ENCODE measurements at regions of chr12 and their contacts with region 1.

Region 1: DNA sequence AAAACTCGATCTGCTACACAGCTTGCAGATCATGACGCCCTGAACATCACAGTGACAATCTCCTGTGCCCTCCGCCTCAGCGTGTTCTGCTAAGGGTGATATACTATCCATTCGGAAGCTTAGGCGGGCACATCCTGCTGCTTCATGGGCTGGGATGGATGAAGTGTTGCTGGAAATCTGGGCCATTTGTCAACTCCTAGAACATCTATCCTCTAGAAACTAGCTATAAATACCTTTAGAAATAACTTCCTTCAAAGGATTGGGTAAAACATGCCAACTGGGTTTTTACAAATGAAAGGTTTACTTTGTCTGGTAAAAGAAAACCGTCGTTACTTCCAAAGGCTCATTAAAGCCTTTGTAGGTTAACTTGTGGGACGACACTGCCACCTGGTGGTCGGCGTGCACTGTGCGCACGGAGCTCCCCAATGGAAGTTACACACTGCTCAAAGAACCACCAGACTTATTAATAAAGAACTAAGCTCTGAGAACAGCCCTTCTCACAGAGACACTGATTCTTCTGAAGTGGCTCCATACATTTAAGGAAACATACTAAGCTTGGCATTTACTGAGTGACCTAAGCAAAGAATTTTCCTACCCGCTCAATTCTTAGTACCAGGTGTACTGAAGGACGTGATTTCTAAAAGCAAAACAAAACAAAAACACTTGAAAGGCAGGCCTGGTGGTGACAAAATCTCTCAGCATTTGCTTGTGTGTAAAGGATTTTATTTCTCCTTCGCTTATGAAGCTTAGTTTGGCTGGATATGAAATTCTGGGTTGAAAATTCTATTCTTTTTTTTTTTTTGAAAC is 21.6 kb upstream of the CACNA2D4 start:
- DNase-seq: peak; percentile 92
- ATAC-seq: peak; percentile 96
- H3K4me3 Mint-ChIP-seq: no peak overlapping the region
- H3K27ac Mint-ChIP-seq: no peak overlapping the region
- H3K4me1 Mint-ChIP-seq: peaks cover 4% of the 10 kb centered on the region
- H3K27me3 Mint-ChIP-seq: no peaks in the 10 kb centered on the region
- CTCF ChIP-seq: peak; percentile 91

Region 2: GRCh38 chr12:1650260-1650977 is 289.6 kb before region 1 on chr12:
- CTCF ChIA-PET with region 1: interaction called, 53 read pairs
- POLR2A ChIA-PET with region 1: interaction called, 5 read pairs
- intact Hi-C with region 1: loop called (anchors 5 kb)
- DNase-seq: no peak
- ATAC-seq: no peak
- H3K4me3 Mint-ChIP-seq: no peak overlapping the region
- H3K27ac Mint-ChIP-seq: no peak overlapping the region
- H3K4me1 Mint-ChIP-seq: no peaks in the 10 kb centered on the region
- H3K27me3 Mint-ChIP-seq: peaks cover 8% of the 10 kb centered on the region
- CTCF ChIP-seq: no peak

Region 3: GRCh38 chr12:1795785-1796514 is 144.1 kb before region 1 on chr12:
- CTCF ChIA-PET with region 1: interaction called, 152 read pairs
- POLR2A ChIA-PET with region 1: interaction called, 17 read pairs
- intact Hi-C with region 1: loop called (anchors 1 kb)
- DNase-seq: peak; percentile 94
- ATAC-seq: peak; percentile 95
- H3K4me3 Mint-ChIP-seq: peak overlapping the region; percentile 85
- H3K27ac Mint-ChIP-seq: peak overlapping the region; percentile 90
- H3K4me1 Mint-ChIP-seq: peaks cover 17% of the 10 kb centered on the region
- H3K27me3 Mint-ChIP-seq: no peaks in the 10 kb centered on the region
- CTCF ChIP-seq: peak; percentile 76

Region 4: GRCh38 chr12:1812650-1813302 is 127.2 kb before region 1 on chr12:
- CTCF ChIA-PET with region 1: interaction called, 11 read pairs
- POLR2A ChIA-PET with region 1: no interaction called
- intact Hi-C with region 1: no loop called
- DNase-seq: no peak
- ATAC-seq: no peak
- H3K4me3 Mint-ChIP-seq: no peak overlapping the region
- H3K27ac Mint-ChIP-seq: peak overlapping the region; percentile 63
- H3K4me1 Mint-ChIP-seq: peaks cover 6% of the 10 kb centered on the region
- H3K27me3 Mint-ChIP-seq: peaks cover 1% of the 10 kb centered on the region
- CTCF ChIP-seq: no peak

Region 5: GRCh38 chr12:1916371-1917171 is 23.4 kb before region 1 on chr12:
- CTCF ChIA-PET with region 1: interaction called, 23 read pairs
- POLR2A ChIA-PET with region 1: interaction called, 3 read pairs
- intact Hi-C with region 1: no loop called
- DNase-seq: no peak
- ATAC-seq: no peak
- H3K4me3 Mint-ChIP-seq: no peak overlapping the region
- H3K27ac Mint-ChIP-seq: peak overlapping the region; percentile 82
- H3K4me1 Mint-ChIP-seq: peaks cover 15% of the 10 kb centered on the region
- H3K27me3 Mint-ChIP-seq: peaks cover 2% of the 10 kb centered on the region
- CTCF ChIP-seq: no peak

Region 6: DNA sequence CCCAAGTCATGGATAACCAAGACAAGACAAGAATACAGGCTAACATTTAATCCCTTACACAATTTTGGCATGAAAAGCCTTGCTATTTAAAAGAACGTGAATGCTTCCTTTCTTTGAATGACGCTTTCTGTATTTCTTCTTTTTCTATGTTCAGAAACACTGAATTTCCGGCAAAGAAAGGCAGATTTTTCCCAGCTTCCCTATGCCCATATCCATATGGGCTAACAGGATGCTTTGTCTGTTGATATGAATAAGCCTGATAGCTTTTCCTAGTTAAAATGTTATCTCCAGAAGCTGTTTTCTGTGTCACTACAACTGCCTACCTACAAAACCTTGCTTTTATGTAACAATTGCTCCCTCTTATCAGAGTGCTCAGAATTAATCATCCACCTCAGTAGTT is 16.7 kb after region 1 on chr12:
- CTCF ChIA-PET with region 1: interaction called, 14 read pairs
- POLR2A ChIA-PET with region 1: no interaction called
- intact Hi-C with region 1: no loop called
- DNase-seq: no peak
- ATAC-seq: no peak
- H3K4me3 Mint-ChIP-seq: no peak overlapping the region
- H3K27ac Mint-ChIP-seq: no peak overlapping the region
- H3K4me1 Mint-ChIP-seq: no peaks in the 10 kb centered on the region
- H3K27me3 Mint-ChIP-seq: no peaks in the 10 kb centered on the region
- CTCF ChIP-seq: no peak

Region 7: DNA sequence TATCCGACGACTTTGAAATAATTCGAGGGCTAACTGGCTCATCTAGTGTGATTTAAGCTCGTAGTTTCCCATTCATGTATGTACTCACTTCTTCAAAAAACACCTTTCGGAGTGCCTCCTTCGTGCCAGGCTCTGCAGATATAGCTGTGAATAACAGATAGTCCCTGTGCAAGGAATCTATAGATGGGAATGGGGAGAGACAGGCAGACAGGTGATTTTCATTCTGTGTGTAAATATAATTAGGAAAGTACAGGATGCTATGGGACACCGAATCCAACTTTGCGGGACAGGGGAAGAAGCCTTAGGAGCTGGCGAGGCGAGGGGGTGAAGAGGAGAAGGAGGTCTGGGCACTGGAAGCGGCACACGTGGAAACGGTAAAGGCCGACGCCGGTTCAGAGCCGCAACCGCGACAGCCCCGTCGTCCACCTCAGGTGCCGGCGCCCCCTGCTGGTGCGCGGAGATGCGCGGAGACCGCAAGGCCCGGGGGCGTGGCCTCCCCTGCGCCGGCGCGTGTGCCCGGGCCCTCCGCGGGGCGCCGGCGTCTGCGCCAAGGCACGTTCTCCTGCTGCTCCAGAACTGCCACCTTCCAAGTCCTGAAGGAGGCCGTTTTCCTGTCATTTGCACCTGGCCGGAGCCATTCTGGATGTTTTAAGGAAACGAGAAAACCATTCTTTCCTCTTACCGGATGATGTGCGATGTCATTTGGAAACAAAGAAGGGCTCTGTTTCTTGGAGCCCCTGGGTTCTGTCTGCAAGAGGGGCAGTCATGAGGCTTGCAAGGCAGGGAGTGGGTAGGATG is 94.8 kb after region 1 on chr12:
- CTCF ChIA-PET with region 1: interaction called, 11 read pairs
- POLR2A ChIA-PET with region 1: no interaction called
- intact Hi-C with region 1: no loop called
- DNase-seq: peak; percentile 91
- ATAC-seq: peak; percentile 98
- H3K4me3 Mint-ChIP-seq: peak overlapping the region; percentile 72
- H3K27ac Mint-ChIP-seq: no peak overlapping the region
- H3K4me1 Mint-ChIP-seq: peaks cover 13% of the 10 kb centered on the region
- H3K27me3 Mint-ChIP-seq: peaks cover 43% of the 10 kb centered on the region
- CTCF ChIP-seq: peak; percentile 96